ENCODE measurements at regions of chr10 and their contacts with region 1.

Region 1: GRCh38 chr10:31031558-31032257 is at the start of gene ZNF438:
- DNase-seq: peak; percentile 99
- ATAC-seq: peak; percentile 97
- total RNA-seq, gene ZNF438: 12.8 TPM

Region 2: GRCh38 chr10:30392564-30392990 is 639.1 kb before region 1 on chr10:
- intact Hi-C with region 1: no loop called
- DNase-seq: peak; percentile 91
- ATAC-seq: peak; percentile 98

Region 3: GRCh38 chr10:30783939-30784500 is 247.7 kb before region 1 on chr10:
- intact Hi-C with region 1: loop called (anchors 1 kb)
- DNase-seq: peak; percentile 90
- ATAC-seq: peak; percentile 83

Region 4: DNA sequence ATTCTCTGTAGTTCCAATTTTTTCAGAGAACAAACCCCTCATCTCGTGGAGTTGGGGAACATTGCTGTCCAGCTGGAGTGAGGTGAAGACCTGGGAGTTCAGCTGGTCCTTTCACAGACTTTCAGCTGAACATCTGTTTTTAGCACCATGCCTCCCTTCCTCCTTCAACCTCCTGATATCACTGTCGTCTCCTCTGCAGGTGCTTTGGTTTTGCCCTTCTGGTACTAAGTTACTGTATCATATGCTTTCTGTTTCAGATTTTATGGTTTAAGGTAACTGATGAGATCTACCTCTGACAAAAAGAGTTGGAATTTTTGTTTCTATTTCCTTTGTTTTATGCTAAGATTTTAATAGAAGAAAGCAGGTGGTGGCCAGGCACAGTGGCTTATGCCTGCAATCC is 103.0 kb before region 1 on chr10:
- intact Hi-C with region 1: loop called (anchors 5 kb)
- DNase-seq: no peak
- ATAC-seq: no peak

Region 5: DNA sequence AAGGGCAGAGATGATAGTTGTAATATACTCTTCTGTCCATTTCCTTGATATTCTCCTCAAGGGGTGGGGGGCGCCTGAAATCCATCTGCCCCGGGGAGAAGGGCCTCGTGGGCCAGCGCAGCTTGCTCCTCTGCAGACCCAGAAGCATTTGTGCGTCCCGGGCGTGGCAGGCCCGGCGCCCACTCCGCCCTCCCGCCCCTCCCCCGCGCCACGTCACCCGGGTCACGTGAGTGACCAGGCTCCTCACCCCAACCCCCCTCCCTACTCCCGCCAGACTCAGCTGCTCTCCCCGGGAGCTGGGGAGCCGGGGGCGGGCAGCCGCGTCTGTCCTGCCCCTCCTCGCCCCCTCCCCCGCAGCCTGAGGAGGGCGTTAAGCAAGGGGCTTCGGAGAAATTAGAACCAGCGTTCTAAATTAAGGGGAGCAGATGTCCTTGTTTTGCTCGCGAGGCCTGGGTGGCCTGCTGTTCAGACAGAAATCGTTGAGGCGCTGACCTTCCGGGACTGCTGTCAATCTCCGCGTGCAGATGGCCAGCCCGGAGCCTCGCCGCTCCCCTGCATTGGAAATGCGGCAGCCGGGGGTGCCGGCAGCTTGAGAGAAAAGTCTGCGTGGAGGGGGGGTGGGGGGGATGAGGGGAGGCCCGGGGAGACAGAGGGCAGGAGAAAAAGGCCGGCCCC is 102.1 kb after region 1 on chr10:
- intact Hi-C with region 1: loop called (anchors 5 kb)
- DNase-seq: peak; percentile 93
- ATAC-seq: peak; percentile 90

Region 6: DNA sequence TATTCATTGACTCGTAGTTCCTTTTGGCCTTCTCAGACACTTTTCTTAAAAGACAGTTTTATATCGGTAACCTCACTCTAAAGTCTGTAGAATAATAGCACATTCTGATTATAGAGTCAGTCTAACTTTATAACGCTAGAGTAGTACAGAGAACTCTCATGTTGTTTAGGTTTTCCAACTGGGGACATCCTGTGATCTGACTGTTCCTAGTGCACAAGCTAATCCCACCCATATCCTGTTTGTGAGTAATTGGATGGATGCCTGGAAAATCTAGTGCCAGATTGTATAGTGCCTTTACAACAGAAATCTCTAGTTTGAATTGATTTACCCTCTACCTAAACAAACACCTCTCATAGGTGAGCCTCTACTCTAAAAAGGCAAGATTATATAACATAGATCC is 394.7 kb after region 1 on chr10:
- intact Hi-C with region 1: loop called (anchors 10 kb)
- DNase-seq: no peak
- ATAC-seq: peak; percentile 61

Region 7: DNA sequence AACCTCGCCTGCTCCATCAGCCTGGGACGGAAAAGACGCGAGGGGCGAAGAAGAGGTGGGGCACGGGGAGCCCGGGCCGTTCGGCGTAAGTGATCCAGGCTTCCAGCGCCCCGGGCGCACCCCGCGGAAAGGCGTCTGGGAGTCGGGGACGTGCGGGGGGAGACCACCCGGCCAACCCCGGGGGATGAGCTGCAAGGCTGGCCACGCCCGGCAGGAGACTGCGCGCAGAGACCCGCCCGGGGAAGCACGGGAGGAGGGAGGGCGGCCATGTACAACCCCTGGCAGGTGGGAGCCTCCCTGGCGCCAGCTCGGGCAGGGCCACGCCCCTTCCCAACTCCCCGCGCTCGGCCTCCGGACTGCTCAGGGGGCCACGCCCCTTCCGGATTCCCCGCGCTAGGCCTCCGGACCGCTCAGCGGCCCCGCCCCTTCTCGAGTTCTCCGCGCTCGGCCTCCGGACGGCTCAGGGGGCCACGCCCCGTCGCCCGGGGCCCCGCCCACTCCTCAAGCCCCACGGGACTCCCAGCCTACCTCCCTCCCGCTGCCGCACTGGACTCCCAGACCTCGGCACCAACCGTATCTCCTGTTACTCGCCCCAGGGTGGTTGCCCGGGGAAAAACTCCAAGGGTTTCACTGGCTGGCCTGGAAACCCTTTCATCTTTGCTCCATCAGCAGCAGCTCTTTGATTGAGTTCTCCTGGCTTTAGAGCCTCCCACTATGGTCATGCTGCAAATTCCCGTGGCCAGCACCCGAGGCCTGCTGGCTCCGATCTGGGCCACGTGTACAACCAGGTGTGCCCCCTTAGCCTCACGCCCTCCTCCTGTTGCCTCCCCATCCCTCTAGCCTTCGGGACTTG is 571.8 kb after region 1 on chr10:
- intact Hi-C with region 1: loop called (anchors 5 kb)
- DNase-seq: peak; percentile 97
- ATAC-seq: peak; percentile 96